ENCODE measurements at regions of chr9 and their contacts with region 1.

Region 1: GRCh38 chr9:4604678-4605095 is 57.4 kb upstream of the PLPP6 start:
- DNase-seq: peak; percentile 45 to 65 (median 51)
- H3K4me3 ChIP-seq: no peak overlapping the region
- H3K4me3 Mint-ChIP-seq: peak overlapping the region in 5 of 7 donors; percentile 3 to 56 (median 37)
- H3K27ac ChIP-seq: no peak overlapping the region
- H3K27ac Mint-ChIP-seq: peak overlapping the region in 4 of 8 donors; percentile 42 to 91 (median 82)
- H3K4me1 ChIP-seq: peaks cover 25% of the 10 kb centered on the region
- H3K4me1 Mint-ChIP-seq: peaks cover 31 to 51% (median 42%) of the 10 kb centered on the region in 3 donors
- H3K27me3 ChIP-seq: no peaks in the 10 kb centered on the region
- H3K27me3 Mint-ChIP-seq: peaks cover 0 to 6% of the 10 kb centered on the region in 2 donors

Region 2: GRCh38 chr9:4530375-4530774 is 74.3 kb before region 1 on chr9:
- CTCF ChIA-PET with region 1: no interaction called
- POLR2A ChIA-PET with region 1: no interaction called
- DNase-seq: peak in 1 of 5 donors; percentile 48
- H3K4me3 ChIP-seq: no peak overlapping the region
- H3K4me3 Mint-ChIP-seq: peak overlapping the region in 3 of 7 donors; percentile 16 to 54 (median 22)
- H3K27ac ChIP-seq: no peak overlapping the region
- H3K27ac Mint-ChIP-seq: peak overlapping the region in 7 of 8 donors; percentile 26 to 93 (median 75)
- H3K4me1 ChIP-seq: peaks cover 7% of the 10 kb centered on the region
- H3K4me1 Mint-ChIP-seq: peaks cover 21 to 29% (median 22%) of the 10 kb centered on the region in 3 donors
- H3K27me3 ChIP-seq: no peaks in the 10 kb centered on the region
- H3K27me3 Mint-ChIP-seq: peaks cover 0 to 3% of the 10 kb centered on the region in 2 donors

Region 3: DNA sequence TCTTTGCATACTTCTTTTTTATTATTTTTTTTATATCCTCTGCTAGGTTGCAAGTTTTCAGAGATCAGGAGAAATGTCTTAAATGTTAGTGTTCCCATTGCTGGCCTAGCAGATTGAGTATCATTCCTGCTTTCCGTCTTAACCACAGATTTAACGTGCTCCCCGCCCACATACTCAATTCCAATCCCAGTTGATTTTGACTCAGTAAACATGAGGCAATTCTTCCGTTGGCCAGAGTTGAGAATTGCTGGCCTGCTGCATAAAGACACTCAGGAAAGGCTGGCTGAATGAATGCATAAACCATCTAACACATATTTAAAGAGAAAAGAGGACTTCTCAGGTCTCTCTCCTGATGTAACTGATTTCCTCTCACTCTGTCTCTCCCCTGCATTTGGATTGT is 10.6 kb after region 1 on chr9:
- CTCF ChIA-PET with region 1: no interaction called
- POLR2A ChIA-PET with region 1: no interaction called
- DNase-seq: no peak
- H3K4me3 ChIP-seq: no peak overlapping the region
- H3K4me3 Mint-ChIP-seq: no peak overlapping the region
- H3K27ac ChIP-seq: no peak overlapping the region
- H3K27ac Mint-ChIP-seq: peak overlapping the region in 3 of 8 donors; percentile 18 to 32 (median 30)
- H3K4me1 ChIP-seq: peaks cover 9% of the 10 kb centered on the region
- H3K4me1 Mint-ChIP-seq: peaks cover 22 to 30% (median 27%) of the 10 kb centered on the region in 3 donors
- H3K27me3 ChIP-seq: no peaks in the 10 kb centered on the region
- H3K27me3 Mint-ChIP-seq: no peaks in the 10 kb centered on the region

Region 4: GRCh38 chr9:4640027-4640426 is 35.3 kb after region 1 on chr9:
- CTCF ChIA-PET with region 1: interaction called, 24 read pairs
- POLR2A ChIA-PET with region 1: interaction called, 3 read pairs
- DNase-seq: peak; percentile 19 to 61 (median 49)
- H3K4me3 ChIP-seq: no peak overlapping the region
- H3K4me3 Mint-ChIP-seq: no peak overlapping the region
- H3K27ac ChIP-seq: no peak overlapping the region
- H3K27ac Mint-ChIP-seq: peak overlapping the region in 1 of 8 donors; percentile 43
- H3K4me1 ChIP-seq: no peaks in the 10 kb centered on the region
- H3K4me1 Mint-ChIP-seq: peaks cover 5 to 16% (median 8%) of the 10 kb centered on the region in 3 donors
- H3K27me3 ChIP-seq: no peaks in the 10 kb centered on the region
- H3K27me3 Mint-ChIP-seq: peaks cover 1 to 3% of the 10 kb centered on the region in 2 donors